ENCODE measurements at regions of chr9 and their contacts with region 1.

Region 1: DNA sequence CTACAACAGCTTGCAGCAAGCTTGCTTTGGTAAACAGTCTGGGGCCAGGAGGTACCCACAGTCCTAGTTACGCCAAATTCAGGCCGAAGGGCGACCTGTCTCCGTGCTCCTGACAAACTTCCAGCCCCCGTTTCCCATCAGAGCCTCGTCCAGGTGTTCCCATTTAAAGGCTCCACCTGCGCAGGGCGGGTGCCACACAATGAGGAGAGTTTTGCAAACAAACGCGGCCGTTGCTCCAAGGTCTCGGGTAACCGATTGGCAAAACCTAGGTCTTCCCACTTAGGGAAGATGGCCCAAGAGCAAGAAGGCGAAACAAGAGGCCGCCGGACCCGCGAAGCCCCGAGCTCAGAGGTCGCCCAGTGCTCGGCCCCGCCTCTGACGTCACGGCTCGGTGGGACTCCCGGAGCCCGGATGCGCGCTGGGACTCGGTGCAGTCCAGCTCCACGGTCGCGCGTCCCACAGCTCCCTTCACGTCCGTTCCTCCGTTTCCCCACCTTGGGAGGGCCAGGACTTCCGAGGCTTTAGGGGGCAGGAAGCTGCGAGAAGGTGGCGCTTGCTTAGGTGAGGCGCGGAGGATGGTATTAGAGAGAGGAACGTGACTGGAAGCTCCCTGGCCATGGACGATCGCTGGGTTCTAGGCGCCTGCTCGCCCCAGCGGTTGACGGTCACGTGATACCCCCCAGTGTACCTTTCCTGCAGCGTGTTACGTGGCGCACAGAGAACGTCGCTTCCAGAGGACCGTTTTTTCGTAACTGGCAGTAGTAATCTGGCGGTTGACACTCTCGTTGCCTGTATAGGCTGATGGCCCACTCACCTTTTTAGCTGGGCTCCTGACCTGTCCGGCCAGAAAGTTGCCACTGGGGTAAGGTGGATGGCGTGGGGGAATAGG is 41.8 kb upstream of the KDM4C start:
- DNase-seq: peak; percentile 84
- ATAC-seq: peak; percentile 94
- H3K4me3 Mint-ChIP-seq: peak overlapping the region; percentile 82
- H3K27ac Mint-ChIP-seq: peak overlapping the region; percentile 92
- H3K4me1 Mint-ChIP-seq: peaks cover 6% of the 10 kb centered on the region
- H3K27me3 Mint-ChIP-seq: peaks cover 2% of the 10 kb centered on the region

Region 2: GRCh38 chr9:6703898-6704639 is 11.9 kb before region 1 on chr9:
- CTCF ChIA-PET with region 1: no interaction called
- POLR2A ChIA-PET with region 1: interaction called, 16 read pairs
- DNase-seq: peak; percentile 91
- ATAC-seq: peak; percentile 91
- H3K4me3 Mint-ChIP-seq: peak overlapping the region; percentile 91
- H3K27ac Mint-ChIP-seq: peak overlapping the region; percentile 95
- H3K4me1 Mint-ChIP-seq: peaks cover 14% of the 10 kb centered on the region
- H3K27me3 Mint-ChIP-seq: peaks cover 5% of the 10 kb centered on the region

Measured in activated CD8-positive, alpha-beta T cell treated with anti-CD3 and anti-CD28 coated beads, Interleukin-2, amount 10 ng/mL, durations not matched to agents 7 days and 5 days (primary cell).